A549 (cell line): ENCODE measurements at regions of chr16 and their contacts with region 1.

Region 1: DNA sequence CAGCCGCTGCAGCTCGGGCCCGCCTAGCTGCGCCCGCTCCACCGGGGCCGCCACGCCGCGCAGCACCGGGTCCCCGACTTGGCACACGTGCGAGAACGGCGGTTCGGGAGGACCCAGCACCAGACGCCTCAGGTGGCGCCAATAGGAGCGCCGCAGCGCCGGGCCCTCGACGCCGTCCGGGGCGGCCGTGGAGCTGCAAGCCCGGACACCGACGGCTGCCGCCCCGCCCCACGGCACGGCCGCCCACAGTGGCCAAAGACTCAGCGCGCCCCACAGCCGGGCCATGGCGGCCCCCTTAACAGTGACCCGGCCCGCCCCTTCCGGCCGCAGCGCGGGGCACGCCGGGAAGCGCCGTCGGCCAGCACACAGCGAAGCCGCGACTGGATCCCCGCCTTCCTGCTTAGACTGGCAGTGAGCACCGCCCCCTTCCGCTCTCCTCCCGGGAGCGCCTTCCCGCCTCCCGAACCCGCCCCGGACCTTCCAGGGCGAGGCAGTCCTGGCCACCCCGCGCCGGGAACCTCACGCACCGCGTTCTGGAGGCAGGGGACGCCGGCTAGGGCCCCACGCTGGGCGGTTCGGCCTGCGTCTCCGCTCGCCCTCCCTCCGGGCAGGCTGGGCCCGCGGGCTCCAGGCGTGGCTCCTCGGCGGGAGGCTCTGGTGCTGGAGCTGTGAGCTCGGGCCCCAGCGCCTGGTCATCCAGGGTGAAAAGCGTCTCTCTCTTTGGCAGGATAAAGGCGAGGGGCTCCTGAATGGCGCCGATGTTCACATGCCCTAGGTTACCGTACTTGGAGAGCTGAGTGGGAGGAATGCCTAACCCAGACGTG is at the start of gene PDF:
- DNase-seq: peak; percentile 93 to 94
- ATAC-seq: peak; percentile 94 to 95
- H3K4me3 ChIP-seq: peak within 1 kb of the TSS; percentile 76
- H3K27ac ChIP-seq: peak within 1 kb of the TSS; percentile 93 to 94
- H3K4me1 ChIP-seq: peaks cover 39% of the 10 kb centered on the region
- CTCF ChIP-seq: no peak
- EP300 ChIP-seq: no peak
- POLR2A ChIP-seq: peak; percentile 87; the same call in 1 of the 2 replicates
- RAD21 ChIP-seq: no peak
- polyA plus RNA-seq, gene PDF: 10.0 and 16.1 TPM in 2 replicates

Region 2: DNA sequence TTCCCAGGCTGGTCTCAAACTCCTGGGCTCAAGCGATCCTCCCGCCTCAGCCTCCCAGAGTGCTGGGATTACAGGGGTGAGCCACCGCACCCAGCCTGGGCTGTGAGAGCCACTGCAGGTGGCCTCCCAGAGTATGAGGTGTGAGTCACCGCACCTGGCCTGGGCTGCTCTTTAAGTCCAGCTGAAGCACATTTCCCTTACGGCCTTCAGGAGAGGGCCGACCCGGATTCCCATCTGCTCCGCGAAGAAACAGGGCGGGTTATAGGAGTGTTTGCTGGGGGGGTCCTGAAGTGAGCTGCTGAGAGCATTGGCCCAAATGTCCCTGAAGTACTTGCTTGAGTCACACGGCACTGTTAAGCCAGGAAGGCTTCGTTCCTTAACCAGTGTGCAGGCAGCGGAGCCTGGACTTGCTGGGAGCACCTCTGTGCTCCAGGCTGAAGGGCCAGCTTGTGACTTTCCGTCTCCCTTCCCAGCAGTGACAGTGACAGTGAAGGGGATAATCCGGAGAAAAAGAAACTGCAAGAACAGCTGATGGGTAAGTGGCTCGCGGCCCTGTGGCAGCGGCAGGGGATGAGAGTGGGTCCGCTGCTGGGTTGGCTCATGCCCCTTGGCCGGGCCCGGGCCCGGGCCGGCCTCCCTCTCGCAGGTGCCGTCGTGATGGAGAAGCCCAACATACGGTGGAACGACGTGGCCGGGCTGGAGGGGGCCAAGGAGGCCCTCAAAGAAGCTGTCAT is 12.2 kb before region 1 on chr16:
- CTCF ChIA-PET with region 1: interaction called, 44 read pairs
- POLR2A ChIA-PET with region 1: interaction called, 22 read pairs
- DNase-seq: no peak
- ATAC-seq: no peak
- H3K4me3 ChIP-seq: no peak overlapping the region
- H3K27ac ChIP-seq: no peak overlapping the region
- H3K4me1 ChIP-seq: no peaks in the 10 kb centered on the region
- CTCF ChIP-seq: no peak
- EP300 ChIP-seq: no peak
- POLR2A ChIP-seq: no peak
- RAD21 ChIP-seq: no peak